Esophagus squamous epithelium (tissue), 5 donors: ENCODE measurements at regions of chr15 and their contacts with region 1.

Region 1: GRCh38 chr15:81265944-81266775 is 57.8 kb downstream of the STARD5 start:
- DNase-seq: peak; percentile 15
- H3K4me3 ChIP-seq: peak overlapping the region in 1 of 4 donors; percentile 45
- H3K27ac ChIP-seq: no peak overlapping the region
- H3K4me1 ChIP-seq: peaks cover 0 to 16% (median 12%) of the 10 kb centered on the region in 3 donors
- H3K27me3 ChIP-seq: peaks cover 0 to 44% (median 0%) of the 10 kb centered on the region in 4 donors
- CTCF ChIP-seq: peak; percentile 79 to 91 (median 86)
- POLR2A ChIP-seq: no peak

Region 2: GRCh38 chr15:80970018-80970658 is 296.0 kb before region 1 on chr15:
- intact Hi-C with region 1: loop called (anchors 10 kb)
- DNase-seq: no peak
- H3K4me3 ChIP-seq: no peak overlapping the region
- H3K27ac ChIP-seq: no peak overlapping the region
- H3K4me1 ChIP-seq: peaks cover 0 to 20% (median 4%) of the 10 kb centered on the region in 3 donors
- H3K27me3 ChIP-seq: no peaks in the 10 kb centered on the region
- CTCF ChIP-seq: peak; percentile 75 to 90 (median 84)
- POLR2A ChIP-seq: no peak

Region 3: DNA sequence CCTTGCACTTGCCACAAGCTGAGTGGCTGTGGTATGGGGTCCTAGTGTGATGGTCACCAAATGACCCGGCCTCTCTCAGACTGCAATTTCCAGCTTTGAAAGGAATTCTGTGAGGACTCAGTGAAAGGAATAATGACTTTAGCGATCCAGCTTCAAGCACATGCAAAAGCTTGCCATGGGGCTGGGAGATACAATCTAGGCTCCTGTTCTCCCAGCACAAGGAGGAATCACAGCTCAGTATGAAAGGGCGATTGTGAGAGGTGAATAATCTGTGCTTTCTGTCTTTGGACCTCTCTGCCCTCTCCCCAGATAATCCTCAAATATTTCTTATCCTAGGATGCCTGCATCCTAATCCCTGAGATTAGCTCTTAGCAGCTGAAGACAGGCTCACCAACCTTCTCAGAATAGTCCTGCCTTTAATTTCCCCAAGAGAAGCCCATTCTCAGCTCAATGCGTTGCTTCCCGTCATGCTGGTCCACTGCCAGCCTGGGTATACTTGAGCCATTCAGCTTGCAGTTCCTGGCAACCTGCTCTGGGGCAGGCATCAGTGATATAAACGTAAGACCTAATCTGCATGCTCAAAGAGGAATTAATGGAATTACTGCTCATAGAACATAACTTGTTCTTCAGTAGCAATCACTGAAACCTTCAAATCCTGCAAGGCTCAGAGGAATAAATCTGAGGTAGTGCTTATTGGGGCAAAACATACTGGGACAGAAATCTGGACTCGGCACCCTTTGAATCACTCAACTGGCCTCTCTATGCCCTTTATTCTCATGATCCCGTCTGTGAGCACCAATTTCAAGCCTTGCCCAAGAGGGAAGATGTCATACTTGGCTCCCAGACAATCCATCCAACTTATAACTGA is 250.3 kb before region 1 on chr15:
- intact Hi-C with region 1: no loop called
- DNase-seq: no peak
- H3K4me3 ChIP-seq: no peak overlapping the region
- H3K27ac ChIP-seq: peak overlapping the region in 2 of 4 donors; percentile 14 to 35
- H3K4me1 ChIP-seq: peaks cover 0 to 20% (median 0%) of the 10 kb centered on the region in 3 donors
- H3K27me3 ChIP-seq: no peaks in the 10 kb centered on the region
- CTCF ChIP-seq: no peak
- POLR2A ChIP-seq: no peak

Region 4: DNA sequence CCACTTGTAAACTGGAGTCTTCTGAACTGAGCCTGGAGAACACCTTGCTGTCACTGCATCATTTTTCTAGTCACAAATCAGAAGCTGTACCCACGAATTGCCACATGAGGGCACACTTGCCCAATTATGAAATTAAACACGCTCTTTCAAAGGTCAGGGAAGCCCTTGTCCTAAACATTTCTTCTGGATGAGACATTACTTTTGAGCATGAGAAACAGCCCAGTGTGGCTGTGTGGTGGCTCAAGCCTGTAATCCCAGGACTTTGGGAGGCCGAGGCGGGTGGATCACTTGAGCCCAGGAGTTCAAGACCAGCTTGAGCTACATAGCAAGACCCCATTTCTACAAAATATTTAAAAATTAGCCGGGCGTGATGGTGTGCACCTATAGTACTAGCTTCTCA is 159.6 kb before region 1 on chr15:
- intact Hi-C with region 1: loop called (anchors 5 kb)
- DNase-seq: no peak
- H3K4me3 ChIP-seq: no peak overlapping the region
- H3K27ac ChIP-seq: no peak overlapping the region
- H3K4me1 ChIP-seq: peaks cover 0 to 14% (median 2%) of the 10 kb centered on the region in 3 donors
- H3K27me3 ChIP-seq: peaks cover 0 to 4% (median 0%) of the 10 kb centered on the region in 4 donors
- CTCF ChIP-seq: peak; percentile 16 to 85 (median 75)
- POLR2A ChIP-seq: no peak

Region 5: DNA sequence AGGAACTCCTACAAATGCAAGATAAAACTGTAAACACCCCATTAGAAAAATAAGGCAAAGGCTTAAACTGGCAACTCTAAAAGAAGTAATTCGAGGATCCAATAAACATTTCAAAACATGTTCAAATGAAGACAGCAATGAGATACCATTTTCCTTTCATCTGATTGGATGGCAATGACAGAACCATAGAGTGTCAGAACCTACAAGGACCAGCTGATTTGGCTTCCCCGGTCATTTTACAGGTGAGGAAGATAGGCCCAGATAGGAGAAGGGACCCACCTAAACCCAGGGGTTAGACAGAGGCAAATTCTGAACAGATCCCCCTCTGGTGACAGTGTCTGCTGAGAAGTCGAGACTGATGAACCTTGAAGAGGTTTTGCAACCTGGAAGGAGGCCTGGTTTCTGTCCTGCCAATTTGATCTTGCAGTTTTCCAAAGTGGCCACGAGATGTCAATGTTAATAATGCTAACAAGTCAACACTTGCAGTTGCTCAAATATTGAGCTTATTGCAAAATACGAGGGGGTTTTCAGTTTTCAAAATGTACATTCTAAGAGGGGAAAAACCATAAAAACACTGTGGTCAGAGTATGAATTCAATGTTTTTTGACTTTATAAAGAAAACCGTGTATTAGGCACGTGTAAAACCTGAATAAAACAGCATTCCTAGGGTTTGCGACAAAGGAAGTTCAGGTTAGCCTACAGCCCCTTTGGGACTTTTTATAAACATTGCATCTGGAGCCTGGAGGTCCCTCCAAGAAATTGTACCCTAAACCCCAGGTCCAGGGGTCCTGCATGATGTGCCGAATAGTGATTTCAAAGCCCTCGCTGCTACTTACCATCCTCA is 110.6 kb before region 1 on chr15:
- intact Hi-C with region 1: loop called (anchors 5 kb)
- DNase-seq: no peak
- H3K4me3 ChIP-seq: no peak overlapping the region
- H3K27ac ChIP-seq: peak overlapping the region in 3 of 4 donors; percentile 20 to 82 (median 69)
- H3K4me1 ChIP-seq: peaks cover 6 to 48% (median 15%) of the 10 kb centered on the region in 3 donors
- H3K27me3 ChIP-seq: no peaks in the 10 kb centered on the region
- CTCF ChIP-seq: peak in 5 of 6 experiments; percentile 51 to 68 (median 57)
- POLR2A ChIP-seq: no peak